CD4-positive, alpha-beta T cell (primary cell): ENCODE measurements at regions of chr13 and their contacts with region 1.

Region 1: GRCh38 chr13:87999791-88000190 is 328.6 kb downstream of the SLITRK5 start:
- DNase-seq: no peak
- ATAC-seq: no peak
- H3K4me3 ChIP-seq: no peak overlapping the region
- H3K4me3 Mint-ChIP-seq: no peak overlapping the region
- H3K27ac ChIP-seq: no peak overlapping the region
- H3K27ac Mint-ChIP-seq: no peak overlapping the region
- H3K4me1 ChIP-seq: no peaks in the 10 kb centered on the region
- H3K4me1 Mint-ChIP-seq: no peaks in the 10 kb centered on the region
- H3K27me3 ChIP-seq: no peaks in the 10 kb centered on the region
- H3K27me3 Mint-ChIP-seq: no peaks in the 10 kb centered on the region
- CTCF ChIP-seq: no peak

Region 2: DNA sequence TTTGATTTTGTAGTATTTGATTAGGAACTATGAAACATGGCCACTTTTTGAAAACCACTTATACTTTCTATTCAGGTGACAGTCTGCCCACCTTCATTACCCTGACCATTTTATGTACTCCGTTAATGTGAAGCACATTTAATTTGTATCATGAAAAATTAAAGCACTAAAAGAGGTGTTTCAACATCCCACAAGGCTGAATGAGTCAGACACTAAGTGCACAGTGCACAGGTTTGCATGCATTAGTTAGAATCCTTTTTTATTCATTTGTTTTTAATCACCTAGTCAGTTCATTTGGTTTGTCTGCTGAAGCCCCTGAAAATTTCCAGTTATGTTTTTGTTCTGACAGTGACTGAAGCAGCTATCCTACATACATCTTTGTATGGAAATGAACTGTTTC is 57.6 kb before region 1 on chr13:
- CTCF ChIA-PET with region 1: no interaction called
- POLR2A ChIA-PET with region 1: no interaction called
- intact Hi-C with region 1: loop called in 1 of 2 experiments (anchors 10 kb)
- DNase-seq: no peak
- ATAC-seq: no peak
- H3K4me3 ChIP-seq: no peak overlapping the region
- H3K4me3 Mint-ChIP-seq: no peak overlapping the region
- H3K27ac ChIP-seq: no peak overlapping the region
- H3K27ac Mint-ChIP-seq: no peak overlapping the region
- H3K4me1 ChIP-seq: no peaks in the 10 kb centered on the region
- H3K4me1 Mint-ChIP-seq: no peaks in the 10 kb centered on the region
- H3K27me3 ChIP-seq: no peaks in the 10 kb centered on the region
- H3K27me3 Mint-ChIP-seq: no peaks in the 10 kb centered on the region
- CTCF ChIP-seq: no peak

Region 3: GRCh38 chr13:88042489-88042888 is 42.7 kb after region 1 on chr13:
- CTCF ChIA-PET with region 1: no interaction called
- POLR2A ChIA-PET with region 1: no interaction called
- intact Hi-C with region 1: no loop called
- DNase-seq: no peak
- ATAC-seq: no peak
- H3K4me3 ChIP-seq: no peak overlapping the region
- H3K4me3 Mint-ChIP-seq: no peak overlapping the region
- H3K27ac ChIP-seq: no peak overlapping the region
- H3K27ac Mint-ChIP-seq: no peak overlapping the region
- H3K4me1 ChIP-seq: no peaks in the 10 kb centered on the region
- H3K4me1 Mint-ChIP-seq: no peaks in the 10 kb centered on the region
- H3K27me3 ChIP-seq: no peaks in the 10 kb centered on the region
- H3K27me3 Mint-ChIP-seq: no peaks in the 10 kb centered on the region
- CTCF ChIP-seq: no peak

Region 4: GRCh38 chr13:89066868-89067466 is 1067.2 kb after region 1 on chr13:
- CTCF ChIA-PET with region 1: no interaction called
- POLR2A ChIA-PET with region 1: no interaction called
- intact Hi-C with region 1: loop called in 1 of 2 experiments (anchors 10 kb)
- DNase-seq: peak in 7 of 14 experiments; percentile 2 to 34 (median 6)
- ATAC-seq: no peak
- H3K4me3 ChIP-seq: no peak overlapping the region
- H3K4me3 Mint-ChIP-seq: no peak overlapping the region
- H3K27ac ChIP-seq: no peak overlapping the region
- H3K27ac Mint-ChIP-seq: no peak overlapping the region
- H3K4me1 ChIP-seq: no peaks in the 10 kb centered on the region
- H3K4me1 Mint-ChIP-seq: no peaks in the 10 kb centered on the region
- H3K27me3 ChIP-seq: no peaks in the 10 kb centered on the region
- H3K27me3 Mint-ChIP-seq: no peaks in the 10 kb centered on the region
- CTCF ChIP-seq: peak; percentile 59